HepG2 (cell line): ENCODE measurements at regions of chr22 and their contacts with region 1.

Region 1: DNA sequence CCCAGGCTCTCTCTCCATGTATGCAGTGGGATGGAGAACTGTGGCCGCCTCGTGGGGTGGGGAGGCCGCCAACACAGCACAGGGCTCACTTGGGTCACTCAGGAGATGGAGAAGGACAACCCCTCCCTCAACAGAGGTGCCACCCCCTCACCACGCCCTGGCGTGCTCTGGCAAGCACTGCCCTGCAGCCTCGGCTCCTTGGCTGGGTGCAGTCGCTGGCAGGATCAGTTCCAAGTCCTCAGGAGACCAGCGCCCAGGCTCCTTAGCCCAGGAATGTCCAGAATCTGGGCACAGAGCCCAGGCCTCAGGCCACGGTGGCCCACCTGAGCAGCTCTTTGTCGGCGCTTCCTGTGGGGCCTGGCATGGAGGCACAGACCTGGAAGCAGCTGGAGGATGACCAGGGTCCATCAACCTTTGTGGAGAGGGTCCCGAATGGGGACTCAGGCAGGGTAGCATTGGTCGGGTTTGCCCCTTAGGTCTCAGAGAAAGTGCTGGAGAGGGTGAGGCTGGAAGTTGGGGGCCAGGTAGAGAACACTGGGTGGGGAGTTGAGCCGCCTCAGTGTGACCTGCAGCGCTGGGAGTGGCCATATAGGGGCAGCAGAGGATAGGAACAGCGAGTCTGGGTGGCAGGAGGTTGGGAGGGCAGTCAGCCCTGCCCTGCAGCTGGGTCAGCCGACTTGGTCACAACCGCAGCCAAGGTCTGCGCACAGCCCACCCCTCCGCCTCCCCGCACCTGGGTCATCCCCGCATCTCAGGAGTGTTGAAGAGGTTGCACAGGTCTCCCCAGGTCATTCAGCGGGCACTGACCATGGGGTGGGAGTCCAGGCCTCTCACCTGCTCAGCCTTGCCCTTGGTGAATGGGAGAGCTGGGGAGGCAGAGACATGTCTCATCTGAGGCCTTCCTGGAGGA is 8.2 kb downstream of the SUSD2 start:
- DNase-seq: peak; percentile 52
- ATAC-seq: peak; percentile 82
- H3K4me3 ChIP-seq: peak overlapping the region in 1 of 3 experiments; percentile 30; a peak in 1 of 6 replicates
- H3K27ac ChIP-seq: no peak overlapping the region
- H3K4me1 ChIP-seq: peaks cover 26% of the 10 kb centered on the region
- H3K27me3 ChIP-seq: no peaks in the 10 kb centered on the region
- CTCF ChIP-seq: peak; percentile 99
- EP300 ChIP-seq: no peak
- POLR2A ChIP-seq: no peak
- RAD21 ChIP-seq: peak; percentile 99

Region 2: DNA sequence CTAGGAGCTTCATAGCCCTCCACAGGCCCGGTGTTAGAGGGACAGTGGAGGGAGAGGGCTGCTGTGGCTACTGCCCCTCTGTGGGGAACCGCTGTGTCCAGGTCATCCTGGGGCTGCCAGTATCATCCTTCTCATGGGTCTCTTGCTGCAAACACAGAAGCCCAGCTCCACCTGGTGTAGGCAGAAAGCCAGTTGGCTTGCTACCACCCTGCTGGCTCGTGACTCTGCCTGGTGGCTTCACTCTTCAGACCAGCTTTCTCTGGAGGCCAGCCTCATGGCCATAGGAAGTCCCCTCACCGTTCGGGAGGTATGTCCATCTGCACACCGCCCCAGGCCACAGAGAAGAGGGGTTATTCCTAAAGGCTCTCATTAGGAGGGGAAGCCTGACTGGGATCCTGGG is 27.6 kb before region 1 on chr22:
- CTCF ChIA-PET with region 1: no interaction called
- POLR2A ChIA-PET with region 1: no interaction called
- in situ Hi-C with region 1: no loop called
- intact Hi-C with region 1: no loop called
- DNase-seq: no peak
- ATAC-seq: no peak
- H3K4me3 ChIP-seq: no peak overlapping the region
- H3K27ac ChIP-seq: no peak overlapping the region
- H3K4me1 ChIP-seq: peaks cover 6% of the 10 kb centered on the region; the same call in 1 of the 2 replicates
- H3K27me3 ChIP-seq: no peaks in the 10 kb centered on the region
- CTCF ChIP-seq: no peak
- EP300 ChIP-seq: no peak
- POLR2A ChIP-seq: no peak
- RAD21 ChIP-seq: no peak

Region 3: DNA sequence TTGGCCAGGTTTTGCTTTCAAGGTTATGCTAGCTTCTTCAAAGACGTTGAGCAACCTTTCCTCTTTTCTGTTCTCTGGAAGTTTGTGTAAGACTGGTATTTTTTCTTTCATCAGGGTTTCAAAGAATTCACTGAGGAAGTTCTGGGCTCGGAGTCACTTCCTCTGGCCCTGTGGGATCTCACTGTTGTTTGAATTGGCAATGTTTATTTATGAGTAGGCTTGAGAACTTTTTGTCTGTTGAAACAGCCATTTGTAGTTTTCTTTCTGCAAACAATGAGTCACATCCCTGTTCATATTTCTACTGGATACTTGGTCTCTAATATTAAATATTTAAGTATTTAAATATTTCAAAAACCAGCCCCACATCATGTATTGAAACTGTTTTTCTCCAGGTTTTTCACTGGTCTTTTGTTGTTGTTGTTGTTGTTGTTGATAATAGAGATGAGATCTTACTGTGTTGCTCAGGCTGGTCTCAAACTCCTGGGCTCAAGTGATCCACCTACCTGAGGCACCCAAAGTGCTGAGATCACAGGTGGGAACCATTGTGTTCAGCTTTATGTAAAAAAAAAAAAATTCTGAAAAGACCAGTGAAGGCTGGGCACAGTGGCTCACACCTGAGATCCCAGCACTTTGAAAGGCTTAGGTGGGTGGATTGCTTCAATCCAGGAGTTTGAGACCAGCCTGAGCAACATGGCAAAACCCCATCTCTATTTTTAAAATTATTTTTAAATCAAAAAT is 18.7 kb after region 1 on chr22:
- CTCF ChIA-PET with region 1: no interaction called
- POLR2A ChIA-PET with region 1: no interaction called
- in situ Hi-C with region 1: no loop called
- intact Hi-C with region 1: no loop called
- DNase-seq: peak; percentile 92
- ATAC-seq: peak; percentile 88
- H3K4me3 ChIP-seq: no peak overlapping the region; a peak in 1 of 6 replicates
- H3K27ac ChIP-seq: peak overlapping the region; percentile 78
- H3K4me1 ChIP-seq: peaks cover 50% of the 10 kb centered on the region
- H3K27me3 ChIP-seq: no peaks in the 10 kb centered on the region
- CTCF ChIP-seq: no peak
- EP300 ChIP-seq: peak in 1 of 2 experiments; percentile 92; a peak in 3 of 4 replicates
- POLR2A ChIP-seq: no peak
- RAD21 ChIP-seq: no peak

Region 4: DNA sequence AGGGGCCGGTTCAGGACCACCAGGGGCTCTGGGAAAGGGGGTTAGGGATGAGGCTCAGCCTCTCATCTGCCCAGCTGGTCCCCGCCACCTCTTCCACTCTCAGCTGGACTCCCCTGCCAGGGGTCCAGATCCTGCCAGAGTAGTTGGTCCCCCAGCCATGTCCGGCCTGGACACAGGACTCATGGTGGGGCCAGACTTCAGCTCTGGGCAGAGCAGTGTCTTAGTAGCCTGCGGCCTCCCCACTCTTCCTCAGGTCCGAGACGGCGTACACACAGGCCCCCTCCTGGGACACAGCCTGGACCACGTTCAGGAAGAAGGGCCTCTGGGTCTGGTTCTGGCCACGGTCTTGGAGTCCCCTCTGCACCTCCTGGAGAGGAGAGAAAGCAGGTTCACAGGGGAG is 30.2 kb after region 1 on chr22:
- CTCF ChIA-PET with region 1: no interaction called
- POLR2A ChIA-PET with region 1: no interaction called
- in situ Hi-C with region 1: no loop called
- intact Hi-C with region 1: no loop called
- DNase-seq: no peak
- ATAC-seq: no peak
- H3K4me3 ChIP-seq: no peak overlapping the region
- H3K27ac ChIP-seq: no peak overlapping the region
- H3K4me1 ChIP-seq: peaks cover 16% of the 10 kb centered on the region
- H3K27me3 ChIP-seq: no peaks in the 10 kb centered on the region
- CTCF ChIP-seq: no peak
- EP300 ChIP-seq: no peak
- POLR2A ChIP-seq: no peak
- RAD21 ChIP-seq: no peak

Region 5: GRCh38 chr22:24230911-24231656 is 41.6 kb after region 1 on chr22:
- CTCF ChIA-PET with region 1: interaction called, 33 read pairs
- POLR2A ChIA-PET with region 1: no interaction called
- in situ Hi-C with region 1: no loop called
- intact Hi-C with region 1: loop called (anchors 1 kb)
- DNase-seq: no peak
- ATAC-seq: peak; percentile 84
- H3K4me3 ChIP-seq: no peak overlapping the region
- H3K27ac ChIP-seq: no peak overlapping the region
- H3K4me1 ChIP-seq: peaks cover 20% of the 10 kb centered on the region
- H3K27me3 ChIP-seq: no peaks in the 10 kb centered on the region
- CTCF ChIP-seq: peak; percentile 61
- EP300 ChIP-seq: no peak
- POLR2A ChIP-seq: no peak
- RAD21 ChIP-seq: peak; percentile 24; the same call in 1 of the 2 replicates

Region 6: GRCh38 chr22:24244101-24244787 is 54.7 kb after region 1 on chr22:
- CTCF ChIA-PET with region 1: interaction called, 61 read pairs
- POLR2A ChIA-PET with region 1: interaction called, 6 read pairs
- in situ Hi-C with region 1: loop called (anchors 5 kb)
- intact Hi-C with region 1: loop called (anchors 1 kb)
- DNase-seq: no peak
- ATAC-seq: peak; percentile 60
- H3K4me3 ChIP-seq: peak overlapping the region in 2 of 3 experiments; percentile 49 to 68; a peak in 4 of 6 replicates
- H3K27ac ChIP-seq: no peak overlapping the region
- H3K4me1 ChIP-seq: peaks cover 56% of the 10 kb centered on the region
- H3K27me3 ChIP-seq: no peaks in the 10 kb centered on the region
- CTCF ChIP-seq: peak; percentile 30
- EP300 ChIP-seq: no peak
- POLR2A ChIP-seq: no peak
- RAD21 ChIP-seq: no peak